ENCODE measurements at regions of chr18 and their contacts with region 1.

Region 1: GRCh38 chr18:43919551-43919950 is 642.3 kb upstream of the SYT4 start:
- DNase-seq: no peak
- H3K4me3 Mint-ChIP-seq: no peak overlapping the region
- H3K27ac Mint-ChIP-seq: no peak overlapping the region
- H3K4me1 Mint-ChIP-seq: no peaks in the 10 kb centered on the region
- H3K27me3 Mint-ChIP-seq: no peaks in the 10 kb centered on the region

Region 2: GRCh38 chr18:43805646-43806194 is 113.8 kb before region 1 on chr18:
- intact Hi-C with region 1: no loop called
- DNase-seq: no peak
- H3K4me3 Mint-ChIP-seq: no peak overlapping the region
- H3K27ac Mint-ChIP-seq: no peak overlapping the region
- H3K4me1 Mint-ChIP-seq: no peaks in the 10 kb centered on the region
- H3K27me3 Mint-ChIP-seq: no peaks in the 10 kb centered on the region

Region 3: GRCh38 chr18:43952398-43952797 is 32.8 kb after region 1 on chr18:
- intact Hi-C with region 1: no loop called
- DNase-seq: no peak
- H3K4me3 Mint-ChIP-seq: no peak overlapping the region
- H3K27ac Mint-ChIP-seq: no peak overlapping the region
- H3K4me1 Mint-ChIP-seq: no peaks in the 10 kb centered on the region
- H3K27me3 Mint-ChIP-seq: no peaks in the 10 kb centered on the region

Region 4: DNA sequence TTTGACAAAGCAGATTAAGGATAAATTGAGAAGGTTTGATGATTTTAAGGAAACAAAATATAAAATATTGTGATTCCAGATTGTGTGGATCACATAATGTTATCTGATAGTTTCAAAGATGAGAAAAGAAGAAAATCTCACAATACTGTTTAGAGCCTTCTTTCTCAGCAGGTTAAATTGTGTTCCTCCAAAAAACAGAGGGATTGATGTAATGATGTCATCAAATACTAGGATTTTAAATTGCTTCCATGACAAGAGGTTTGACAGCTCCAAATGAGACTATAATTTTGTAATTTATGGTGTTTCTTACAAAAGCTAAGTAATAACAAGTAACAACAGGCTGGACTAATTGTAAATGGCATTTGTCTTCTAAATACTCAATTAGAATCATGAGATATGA is 61.7 kb after region 1 on chr18:
- intact Hi-C with region 1: loop called (anchors 10 kb)
- DNase-seq: no peak
- H3K4me3 Mint-ChIP-seq: no peak overlapping the region
- H3K27ac Mint-ChIP-seq: no peak overlapping the region
- H3K4me1 Mint-ChIP-seq: no peaks in the 10 kb centered on the region
- H3K27me3 Mint-ChIP-seq: no peaks in the 10 kb centered on the region